Activated T-helper 2 cell treated with anti-CD3 and anti-CD28 coated beads, Interferon-gamma antibody, Interleukin-2, Interleukin-4, amounts not matched to agents 10 μg/mL and 5 μg/mL and 100 μg/mL, durations not matched to agents 14 hours and 24 hours and 36 hours (primary cell): ENCODE measurements at regions of chr17 and their contacts with region 1.

Region 1: DNA sequence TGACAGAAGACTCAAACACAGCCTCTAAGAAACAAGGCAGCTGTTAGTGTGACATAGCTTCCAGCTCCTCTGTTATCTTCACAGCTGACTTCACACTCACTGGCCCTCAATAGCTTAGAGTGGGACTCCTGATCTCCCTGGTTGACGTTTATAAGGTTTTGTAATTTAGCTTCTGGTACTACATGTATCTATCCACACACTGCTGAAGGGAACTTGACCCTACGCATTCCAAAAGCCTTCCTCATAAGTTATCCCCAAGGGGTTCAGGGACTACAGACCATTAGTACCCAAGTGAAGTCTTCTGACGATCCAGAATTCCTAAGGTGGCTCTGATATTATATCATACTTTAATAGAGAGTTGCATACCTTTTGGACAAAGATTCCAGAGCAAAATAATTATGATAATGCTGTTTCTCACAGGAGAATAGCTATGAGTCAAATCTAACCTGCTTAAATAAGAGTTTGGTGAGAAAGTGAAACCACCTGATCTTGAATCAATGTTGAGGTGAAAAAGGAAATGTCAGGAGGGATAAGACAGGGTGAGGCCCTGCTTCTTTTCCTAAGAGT is 14.5 kb downstream of the ACACA start:
- DNase-seq: no peak
- H3K4me3 Mint-ChIP-seq: no peak overlapping the region
- H3K27ac Mint-ChIP-seq: no peak overlapping the region
- H3K4me1 Mint-ChIP-seq: peaks cover 26% of the 10 kb centered on the region
- H3K27me3 Mint-ChIP-seq: no peaks in the 10 kb centered on the region

Region 2: DNA sequence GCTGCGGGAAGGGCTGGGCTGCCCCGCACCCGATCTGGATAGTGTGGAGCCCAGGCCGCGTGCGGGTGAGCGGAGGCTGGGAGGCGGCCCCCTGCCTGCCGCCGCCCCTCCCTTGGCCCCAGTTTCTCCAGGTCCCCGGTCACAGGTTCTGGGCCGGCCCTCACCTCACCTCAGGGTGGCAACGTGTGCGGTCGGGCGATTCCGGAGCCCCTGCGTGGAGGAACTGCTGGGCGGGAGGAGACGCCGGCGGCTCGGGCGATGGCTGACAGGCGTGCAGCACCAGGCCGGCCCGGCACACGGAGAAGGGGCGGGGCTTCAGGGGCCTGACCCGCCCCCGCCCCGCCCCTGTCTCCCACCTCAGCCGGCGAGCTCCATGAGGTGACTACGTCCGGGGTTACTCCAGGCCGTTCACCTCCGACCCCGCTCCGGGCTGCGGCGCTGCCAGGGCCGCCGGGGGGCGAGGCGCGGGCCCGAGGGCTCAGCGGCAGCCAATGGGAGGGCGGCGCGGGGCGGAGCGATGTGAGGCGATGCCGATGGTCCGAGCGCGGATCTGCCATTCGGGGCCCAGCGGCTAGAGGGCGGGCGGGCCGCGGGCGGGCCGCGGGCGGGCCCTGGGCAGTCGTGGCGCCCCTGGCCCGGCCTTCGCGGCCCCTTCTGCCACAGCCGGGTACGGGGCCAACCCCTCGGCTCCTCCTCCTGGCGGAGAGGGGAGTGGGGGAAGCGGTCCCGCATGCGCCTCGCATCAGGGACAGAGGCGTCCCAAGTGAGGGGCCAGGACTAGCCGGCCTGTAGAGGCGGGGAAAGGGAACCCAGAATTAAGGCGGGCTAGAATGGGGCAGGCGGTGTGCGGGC is 33.1 kb before region 1 on chr17:
- intact Hi-C with region 1: loop called (anchors 5 kb)
- DNase-seq: peak; percentile 92
- H3K4me3 Mint-ChIP-seq: peak overlapping the region; percentile 96
- H3K27ac Mint-ChIP-seq: peak overlapping the region; percentile 83
- H3K4me1 Mint-ChIP-seq: peaks cover 20% of the 10 kb centered on the region
- H3K27me3 Mint-ChIP-seq: no peaks in the 10 kb centered on the region

Region 3: DNA sequence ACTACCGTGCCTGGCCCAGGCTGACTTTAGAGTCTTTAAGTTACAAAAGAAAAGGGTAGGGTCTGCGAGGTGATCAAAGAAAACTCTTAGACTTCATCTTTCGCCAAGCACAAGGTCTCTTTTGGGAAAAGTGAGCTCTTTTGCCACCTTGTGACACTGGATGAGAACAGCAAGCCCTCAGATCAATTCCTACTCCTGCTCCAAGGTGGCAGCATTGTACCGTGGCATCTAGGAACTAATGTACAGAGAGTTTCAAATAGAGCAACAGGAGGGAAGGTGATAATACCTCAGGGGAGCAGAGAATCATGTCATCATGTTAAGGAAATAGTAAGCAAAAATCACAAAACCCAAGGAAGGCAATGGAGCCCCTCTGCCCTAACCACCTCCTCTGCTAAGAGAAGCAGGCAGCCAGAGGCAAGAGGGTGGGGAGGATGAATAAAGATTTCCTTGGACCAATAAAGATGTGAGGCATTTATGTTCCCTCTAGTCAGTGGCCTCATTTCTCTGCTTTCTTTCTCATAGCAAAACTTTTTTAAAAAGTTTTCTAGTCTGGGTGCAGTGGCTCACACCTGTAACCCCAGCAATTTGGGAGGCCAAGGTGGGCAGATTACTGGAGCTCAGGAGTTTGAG is 18.5 kb before region 1 on chr17:
- intact Hi-C with region 1: loop called (anchors 1 kb)
- DNase-seq: peak; percentile 59
- H3K4me3 Mint-ChIP-seq: no peak overlapping the region
- H3K27ac Mint-ChIP-seq: no peak overlapping the region
- H3K4me1 Mint-ChIP-seq: peaks cover 6% of the 10 kb centered on the region
- H3K27me3 Mint-ChIP-seq: no peaks in the 10 kb centered on the region